ENCODE measurements at regions of chr1 and their contacts with region 1.

Region 1: DNA sequence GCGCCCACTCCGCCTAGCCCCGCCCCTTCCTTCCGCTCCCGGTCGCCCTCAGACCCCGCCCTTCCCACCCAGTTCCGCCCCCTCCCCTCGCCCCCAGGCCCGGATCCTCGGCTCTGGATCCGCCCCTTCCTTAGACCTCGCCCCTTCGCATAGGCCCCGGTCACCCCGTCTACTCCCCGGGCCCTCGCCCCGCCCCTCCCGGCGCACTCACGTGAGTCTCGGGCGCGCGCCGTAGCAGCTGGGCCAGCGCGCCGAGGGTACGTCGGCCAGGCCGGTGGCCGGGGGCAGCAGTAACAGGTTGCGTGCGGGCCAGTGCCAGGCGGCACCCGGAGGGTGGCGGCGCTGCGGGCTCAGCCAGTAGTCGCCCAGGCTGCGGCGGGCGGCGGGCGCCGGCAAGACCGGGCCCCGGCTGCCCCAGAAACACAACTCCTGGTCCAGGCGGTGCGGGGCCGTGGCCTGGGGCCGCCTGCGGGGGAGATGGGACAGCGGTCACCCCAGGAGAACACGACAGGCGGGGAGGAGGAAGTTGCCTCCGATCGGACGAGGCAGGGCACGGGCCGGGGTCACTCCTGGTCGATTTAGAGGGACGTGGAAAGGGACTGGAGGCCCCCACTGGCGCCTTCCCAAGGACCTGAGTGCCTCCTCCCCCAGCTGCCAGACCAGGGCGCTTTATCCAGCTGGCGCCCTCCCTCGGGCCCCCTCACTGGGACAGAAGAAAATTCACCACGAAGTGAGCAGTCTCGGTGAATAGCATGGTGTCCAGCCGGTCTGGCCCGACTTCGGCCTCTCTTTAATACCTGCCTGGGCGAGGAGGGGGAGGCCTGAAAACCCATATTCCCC is 10.7 kb downstream of the FAM229A start:
- DNase-seq: peak; percentile 100

Region 2: DNA sequence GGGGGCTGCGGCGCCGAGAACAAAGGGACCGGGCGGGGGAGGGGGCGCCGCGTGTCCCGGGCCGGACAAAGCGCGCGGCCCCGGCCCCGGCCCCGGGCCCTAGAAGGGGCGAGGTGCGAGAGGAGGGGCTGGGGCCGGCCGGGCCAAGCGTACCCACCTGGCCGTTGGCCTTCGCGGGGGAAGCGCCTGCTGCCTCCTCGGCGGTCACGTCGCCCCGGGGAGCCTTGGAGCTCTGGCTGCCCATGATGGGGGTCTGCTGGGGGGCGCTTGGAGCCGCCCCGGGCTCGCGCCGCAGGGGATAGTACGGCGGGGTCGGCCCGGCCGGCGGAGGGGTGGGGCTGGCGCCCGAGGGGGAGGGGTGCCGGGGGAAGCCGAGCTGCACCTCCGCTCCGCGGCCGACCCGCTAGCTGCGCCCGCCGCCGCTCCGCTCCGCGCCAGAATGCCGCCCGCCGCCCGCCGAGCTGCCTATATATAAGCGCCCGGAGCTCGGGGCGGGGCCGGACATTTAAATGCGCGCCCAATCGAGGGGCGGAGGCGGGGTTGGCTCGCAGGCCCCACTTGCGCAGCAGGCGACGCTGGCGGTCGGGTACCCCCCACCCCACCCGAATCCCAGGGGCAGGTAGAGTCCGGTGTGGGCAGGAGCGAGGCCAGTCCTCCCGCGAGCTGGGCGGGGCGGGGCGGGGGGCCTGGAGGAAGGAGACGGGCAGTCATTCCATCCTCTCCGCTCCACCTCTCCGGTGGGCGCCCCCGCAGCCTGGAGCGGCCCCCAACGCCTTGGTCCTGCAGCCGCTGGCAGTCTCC is 15.6 kb before region 1 on chr1 and contains the start of gene MARCKSL1:
- CTCF ChIA-PET with region 1: interaction called, 3 read pairs
- POLR2A ChIA-PET with region 1: interaction called, 33 read pairs
- DNase-seq: peak; percentile 93

Region 3: GRCh38 chr1:32394141-32394889 is 42.7 kb after region 1 on chr1 and contains the start of gene BSDC1:
- CTCF ChIA-PET with region 1: no interaction called
- POLR2A ChIA-PET with region 1: interaction called, 11 read pairs
- DNase-seq: peak; percentile 100